Activated B cell treated with CpG ODN at 0.5 μM for 24 hours (primary cell): ENCODE measurements at regions of chr19 and their contacts with region 1.

Region 1: GRCh38 chr19:38079926-38080380 is 144.1 kb downstream of the DPF1 start:
- DNase-seq: no peak
- ATAC-seq: peak; percentile 83
- H3K4me3 Mint-ChIP-seq: peak overlapping the region; percentile 28
- H3K27ac Mint-ChIP-seq: peak overlapping the region; percentile 87
- H3K4me1 Mint-ChIP-seq: peaks cover 22% of the 10 kb centered on the region
- H3K27me3 Mint-ChIP-seq: no peaks in the 10 kb centered on the region
- CTCF ChIP-seq: no peak

Region 2: DNA sequence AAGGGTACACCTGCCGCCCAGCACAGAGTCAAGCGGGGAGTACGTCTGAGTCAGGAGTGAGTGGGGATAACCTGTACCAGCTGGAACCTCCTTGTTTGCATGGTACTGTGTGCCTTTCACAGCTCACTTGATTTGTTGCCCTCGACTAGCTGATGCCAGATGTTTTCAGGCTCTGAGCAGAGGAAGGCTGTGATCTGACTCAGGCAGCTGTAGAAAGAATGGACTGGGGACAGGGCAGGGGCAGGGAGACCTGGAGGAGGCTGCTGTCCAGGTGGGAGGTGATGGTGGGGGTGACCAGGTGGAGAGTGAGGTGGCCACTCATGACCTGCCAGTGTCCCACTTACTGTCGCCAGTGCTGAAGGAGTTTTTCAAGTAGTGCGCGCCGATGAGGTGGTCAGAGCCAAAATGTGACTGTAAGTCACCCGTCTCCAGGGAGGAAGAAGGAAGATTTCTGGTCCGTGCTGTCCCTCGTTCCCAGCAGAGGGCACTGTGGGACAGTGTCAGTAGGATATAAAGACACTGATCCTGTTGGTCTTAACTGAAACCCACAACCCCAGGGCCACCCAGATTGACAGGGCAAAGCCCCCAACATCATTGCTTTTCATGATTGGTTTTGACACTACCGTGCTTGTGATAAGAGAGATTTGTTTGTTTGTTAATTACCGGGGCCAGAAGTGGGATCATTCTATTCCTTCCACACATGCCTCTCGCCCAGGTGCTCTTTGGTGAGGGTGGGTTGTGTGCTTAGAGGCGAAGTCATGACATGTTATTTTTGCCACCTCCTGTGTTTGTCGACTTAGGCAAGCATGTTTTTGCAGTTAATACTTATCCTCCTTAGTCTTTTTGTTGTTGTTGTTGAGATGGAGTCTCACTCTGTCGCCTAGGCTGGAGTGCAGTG is 15.7 kb after region 1 on chr19:
- CTCF ChIA-PET with region 1: interaction called, 8 read pairs
- POLR2A ChIA-PET with region 1: interaction called, 10 read pairs
- intact Hi-C with region 1: no loop called
- DNase-seq: peak; percentile 59
- ATAC-seq: peak; percentile 85
- H3K4me3 Mint-ChIP-seq: no peak overlapping the region
- H3K27ac Mint-ChIP-seq: peak overlapping the region; percentile 85
- H3K4me1 Mint-ChIP-seq: peaks cover 18% of the 10 kb centered on the region
- H3K27me3 Mint-ChIP-seq: no peaks in the 10 kb centered on the region
- CTCF ChIP-seq: peak; percentile 33

Region 3: DNA sequence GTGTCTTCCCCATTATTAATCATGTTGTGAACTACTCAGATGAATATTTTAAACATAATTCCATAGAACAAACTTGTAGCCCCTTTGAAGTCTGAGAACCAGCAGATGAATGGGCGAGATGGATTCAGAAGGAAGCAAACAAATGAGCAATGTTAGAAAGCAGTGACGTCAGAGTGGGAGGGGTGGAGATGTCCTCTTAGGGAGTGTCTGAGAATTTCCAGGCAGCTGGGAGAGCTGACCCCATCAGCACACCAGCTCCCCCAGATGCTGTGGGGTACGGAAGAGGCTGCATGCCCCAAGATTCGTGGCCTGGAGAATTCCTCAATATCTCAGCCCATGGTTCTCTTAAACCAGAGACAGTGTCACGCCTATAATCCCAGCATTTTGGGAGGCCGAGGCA is 75.5 kb after region 1 on chr19:
- CTCF ChIA-PET with region 1: no interaction called
- POLR2A ChIA-PET with region 1: no interaction called
- intact Hi-C with region 1: no loop called
- DNase-seq: no peak
- ATAC-seq: no peak
- H3K4me3 Mint-ChIP-seq: no peak overlapping the region
- H3K27ac Mint-ChIP-seq: no peak overlapping the region
- H3K4me1 Mint-ChIP-seq: no peaks in the 10 kb centered on the region
- H3K27me3 Mint-ChIP-seq: no peaks in the 10 kb centered on the region
- CTCF ChIP-seq: no peak